GM10248 (cell line): ENCODE measurements at regions of chr5 and their contacts with region 1.

Region 1: GRCh38 chr5:69093771-69094482 is at the start of gene SLC30A5:
- DNase-seq: peak; percentile 97
- CTCF ChIP-seq: peak; percentile 95

Region 2: GRCh38 chr5:69083412-69083811 is 10.5 kb before region 1 on chr5:
- CTCF ChIA-PET with region 1: interaction called, 41 read pairs
- POLR2A ChIA-PET with region 1: no interaction called
- DNase-seq: no peak
- CTCF ChIP-seq: no peak

Region 3: GRCh38 chr5:69105996-69106906 is 12.3 kb after region 1 on chr5:
- CTCF ChIA-PET with region 1: interaction called, 12 read pairs
- POLR2A ChIA-PET with region 1: no interaction called
- DNase-seq: peak; percentile 67
- CTCF ChIP-seq: no peak